Activated naive CD4-positive, alpha-beta T cell treated with anti-CD3 and anti-CD28 coated beads for 36 hours (primary cell): ENCODE measurements at regions of chr13 and their contacts with region 1.

Region 1: GRCh38 chr13:91348906-91349435 is 1.5 kb downstream of the MIR17HG start:
- DNase-seq: peak; percentile 94
- H3K4me3 Mint-ChIP-seq: peak overlapping the region; percentile 95
- H3K27ac Mint-ChIP-seq: peak overlapping the region; percentile 91
- H3K4me1 Mint-ChIP-seq: peaks cover 45% of the 10 kb centered on the region
- H3K27me3 Mint-ChIP-seq: no peaks in the 10 kb centered on the region

Region 2: DNA sequence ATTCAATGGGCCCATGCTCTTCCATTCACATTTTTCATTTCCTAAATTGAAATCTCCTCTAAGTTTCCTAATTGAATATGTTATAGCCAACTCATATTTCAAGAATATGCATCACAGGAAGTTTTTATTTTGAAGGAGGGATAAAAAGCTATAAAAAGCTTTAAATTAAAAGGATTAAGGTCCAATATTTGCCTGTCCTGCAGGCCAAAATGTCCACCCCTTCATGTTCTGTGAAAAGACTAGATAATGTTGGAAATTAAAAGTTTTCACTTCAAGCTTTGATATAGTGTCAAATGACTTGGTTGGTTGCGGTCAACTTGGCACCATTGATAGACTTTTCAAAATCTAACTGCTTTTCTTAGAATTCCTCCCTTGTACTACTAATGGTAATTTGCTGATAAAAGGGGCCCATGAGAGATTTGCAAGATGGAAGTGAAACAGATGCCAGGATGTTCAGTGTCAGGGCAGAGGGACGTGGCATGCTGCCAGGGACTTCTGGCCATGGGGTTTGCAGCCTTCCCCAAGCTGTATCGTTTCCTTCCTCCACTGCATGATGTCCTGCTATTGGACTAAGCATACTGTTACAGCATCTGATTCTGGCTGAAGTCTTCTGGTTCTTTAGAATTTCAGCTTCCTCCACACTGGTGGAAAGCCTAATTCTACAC is 548.8 kb before region 1 on chr13:
- CTCF ChIA-PET with region 1: no interaction called
- intact Hi-C with region 1: no loop called
- DNase-seq: no peak
- H3K4me3 Mint-ChIP-seq: no peak overlapping the region
- H3K27ac Mint-ChIP-seq: no peak overlapping the region
- H3K4me1 Mint-ChIP-seq: no peaks in the 10 kb centered on the region
- H3K27me3 Mint-ChIP-seq: no peaks in the 10 kb centered on the region

Region 3: GRCh38 chr13:91331047-91331915 is 17.7 kb before region 1 on chr13:
- CTCF ChIA-PET with region 1: interaction called, 5 read pairs
- intact Hi-C with region 1: loop called (anchors 1 kb)
- DNase-seq: no peak
- H3K4me3 Mint-ChIP-seq: peak overlapping the region; percentile 22
- H3K27ac Mint-ChIP-seq: peak overlapping the region; percentile 41
- H3K4me1 Mint-ChIP-seq: peaks cover 22% of the 10 kb centered on the region
- H3K27me3 Mint-ChIP-seq: no peaks in the 10 kb centered on the region

Region 4: DNA sequence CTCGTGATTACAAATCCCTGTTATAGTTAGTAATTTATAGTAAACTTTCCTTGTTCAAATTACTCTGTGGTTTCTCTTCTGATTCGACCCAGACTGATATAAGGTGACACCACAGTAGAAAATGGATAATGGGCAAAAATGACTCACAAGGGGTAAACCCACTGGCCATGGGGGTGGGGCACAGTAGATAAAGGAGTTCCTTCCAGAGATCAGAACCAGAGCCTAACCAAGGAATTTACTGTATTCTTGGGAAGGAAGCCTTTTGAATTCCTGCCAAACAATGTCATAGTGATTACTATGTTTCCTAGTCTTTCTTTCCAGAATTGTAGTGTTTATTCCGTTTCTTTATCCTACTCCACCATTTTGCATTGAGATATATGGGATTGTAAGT is 20.5 kb after region 1 on chr13:
- CTCF ChIA-PET with region 1: interaction called, 3 read pairs
- intact Hi-C with region 1: loop called (anchors 1 kb)
- DNase-seq: peak; percentile 61
- H3K4me3 Mint-ChIP-seq: no peak overlapping the region
- H3K27ac Mint-ChIP-seq: peak overlapping the region; percentile 83
- H3K4me1 Mint-ChIP-seq: peaks cover 30% of the 10 kb centered on the region
- H3K27me3 Mint-ChIP-seq: peaks cover 3% of the 10 kb centered on the region

Region 5: GRCh38 chr13:91398413-91399272 is 49.7 kb after region 1 on chr13 and contains the start of gene GPC5:
- CTCF ChIA-PET with region 1: no interaction called
- intact Hi-C with region 1: loop called (anchors 1 kb)
- DNase-seq: peak; percentile 84
- H3K4me3 Mint-ChIP-seq: peak within 1 kb of the TSS; percentile 75
- H3K27ac Mint-ChIP-seq: no peak within 1 kb of the TSS
- H3K4me1 Mint-ChIP-seq: peaks cover 17% of the 10 kb centered on the region
- H3K27me3 Mint-ChIP-seq: peaks cover 52% of the 10 kb centered on the region
- total RNA-seq, gene GPC5: 0.38 to 0.40 TPM

Region 6: GRCh38 chr13:91845612-91846011 is 496.6 kb after region 1 on chr13:
- CTCF ChIA-PET with region 1: no interaction called
- intact Hi-C with region 1: no loop called
- DNase-seq: no peak
- H3K4me3 Mint-ChIP-seq: no peak overlapping the region
- H3K27ac Mint-ChIP-seq: no peak overlapping the region
- H3K4me1 Mint-ChIP-seq: no peaks in the 10 kb centered on the region
- H3K27me3 Mint-ChIP-seq: no peaks in the 10 kb centered on the region